Activated CD4-positive, alpha-beta memory T cell treated with anti-CD3 and anti-CD28 coated beads, Interleukin-2, amount 10 ng/mL, durations not matched to agents 7 days and 5 days (primary cell): ENCODE measurements at regions of chr16 and their contacts with region 1.

Region 1: GRCh38 chr16:56262148-56262547 is 70.9 kb downstream of the GNAO1 start:
- DNase-seq: peak; percentile 68
- H3K4me3 Mint-ChIP-seq: peak overlapping the region; percentile 1
- H3K27ac Mint-ChIP-seq: peak overlapping the region; percentile 71
- H3K4me1 Mint-ChIP-seq: peaks cover 36% of the 10 kb centered on the region
- H3K27me3 Mint-ChIP-seq: no peaks in the 10 kb centered on the region

Region 2: DNA sequence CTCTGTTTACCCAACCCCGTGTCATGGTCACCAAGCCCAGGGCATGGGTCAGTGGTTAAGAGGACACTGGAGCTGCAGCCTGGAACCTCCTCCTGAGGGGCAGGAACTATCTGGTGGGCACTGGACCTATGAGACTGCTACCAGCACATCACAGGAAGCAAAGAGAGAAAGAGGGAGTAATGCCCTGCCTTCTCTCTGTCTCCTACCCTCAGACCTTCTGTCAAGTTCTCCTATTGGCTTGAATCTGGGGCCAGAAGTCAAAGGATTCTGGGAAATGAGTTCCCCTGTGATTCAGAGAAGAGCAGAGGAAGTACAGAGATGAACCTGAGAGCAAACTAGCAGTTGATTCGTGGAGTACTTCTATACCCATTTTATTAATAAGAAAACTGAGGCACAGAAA is 193.8 kb before region 1 on chr16:
- CTCF ChIA-PET with region 1: no interaction called
- POLR2A ChIA-PET with region 1: no interaction called
- DNase-seq: no peak
- H3K4me3 Mint-ChIP-seq: no peak overlapping the region
- H3K27ac Mint-ChIP-seq: no peak overlapping the region
- H3K4me1 Mint-ChIP-seq: peaks cover 11% of the 10 kb centered on the region
- H3K27me3 Mint-ChIP-seq: no peaks in the 10 kb centered on the region

Region 3: DNA sequence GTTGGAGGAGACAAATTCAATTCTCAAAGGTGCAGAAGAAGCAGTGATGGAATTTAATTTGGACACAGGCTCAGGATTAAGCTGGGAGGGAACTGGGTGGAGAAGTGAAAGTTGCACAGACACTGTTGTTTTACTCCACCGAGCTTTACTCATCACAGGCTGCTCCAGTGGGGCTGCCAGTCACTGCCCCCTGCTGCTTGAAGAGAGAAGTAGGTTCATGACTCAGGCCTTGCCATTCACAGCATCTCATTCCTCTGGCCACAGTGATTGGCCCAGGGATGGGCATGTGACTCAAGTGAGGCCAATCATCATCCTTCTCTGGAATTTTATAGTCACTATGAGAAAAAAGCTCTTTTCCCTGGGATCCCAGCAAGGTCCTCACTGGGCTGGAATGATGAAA is 59.1 kb before region 1 on chr16:
- CTCF ChIA-PET with region 1: interaction called, 11 read pairs
- POLR2A ChIA-PET with region 1: interaction called, 5 read pairs
- DNase-seq: peak; percentile 65
- H3K4me3 Mint-ChIP-seq: no peak overlapping the region
- H3K27ac Mint-ChIP-seq: no peak overlapping the region
- H3K4me1 Mint-ChIP-seq: no peaks in the 10 kb centered on the region
- H3K27me3 Mint-ChIP-seq: peaks cover 9% of the 10 kb centered on the region

Region 4: DNA sequence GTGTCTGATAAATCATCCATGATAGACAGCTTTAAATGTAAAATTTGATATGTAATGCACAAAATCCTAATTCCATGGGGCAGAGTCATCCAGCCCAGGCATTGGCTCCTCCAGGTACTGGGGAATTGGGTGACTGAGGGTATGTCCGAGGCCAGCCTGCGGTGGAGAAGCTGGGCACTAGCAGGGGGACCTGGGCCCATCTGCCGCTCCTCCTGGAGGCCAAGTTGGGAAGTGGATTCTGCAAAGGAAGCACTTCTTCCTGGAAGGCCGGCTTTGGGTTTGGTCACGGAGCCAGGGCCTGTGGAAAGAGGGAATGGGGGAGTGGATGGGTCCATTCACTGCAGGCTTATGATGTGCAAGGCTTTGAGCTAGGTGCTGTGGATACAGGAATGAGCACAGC is 14.9 kb after region 1 on chr16:
- CTCF ChIA-PET with region 1: interaction called, 6 read pairs
- POLR2A ChIA-PET with region 1: interaction called, 11 read pairs
- DNase-seq: no peak
- H3K4me3 Mint-ChIP-seq: no peak overlapping the region
- H3K27ac Mint-ChIP-seq: no peak overlapping the region
- H3K4me1 Mint-ChIP-seq: peaks cover 25% of the 10 kb centered on the region
- H3K27me3 Mint-ChIP-seq: peaks cover 15% of the 10 kb centered on the region

Region 5: GRCh38 chr16:56317998-56318826 is 56.1 kb after region 1 on chr16:
- CTCF ChIA-PET with region 1: interaction called, 11 read pairs
- POLR2A ChIA-PET with region 1: interaction called, 3 read pairs
- DNase-seq: peak; percentile 81
- H3K4me3 Mint-ChIP-seq: no peak overlapping the region
- H3K27ac Mint-ChIP-seq: no peak overlapping the region
- H3K4me1 Mint-ChIP-seq: peaks cover 5% of the 10 kb centered on the region
- H3K27me3 Mint-ChIP-seq: peaks cover 5% of the 10 kb centered on the region